ENCODE measurements at regions of chr18 and their contacts with region 1.

Region 1: GRCh38 chr18:22703883-22704585 is 229.1 kb upstream of the RBBP8 start:
- DNase-seq: no peak
- H3K4me3 ChIP-seq: no peak overlapping the region
- H3K27ac ChIP-seq: no peak overlapping the region
- H3K4me1 ChIP-seq: no peaks in the 10 kb centered on the region
- H3K27me3 ChIP-seq: no peaks in the 10 kb centered on the region
- CTCF ChIP-seq: peak; percentile 25 to 60 (median 48)

Region 2: DNA sequence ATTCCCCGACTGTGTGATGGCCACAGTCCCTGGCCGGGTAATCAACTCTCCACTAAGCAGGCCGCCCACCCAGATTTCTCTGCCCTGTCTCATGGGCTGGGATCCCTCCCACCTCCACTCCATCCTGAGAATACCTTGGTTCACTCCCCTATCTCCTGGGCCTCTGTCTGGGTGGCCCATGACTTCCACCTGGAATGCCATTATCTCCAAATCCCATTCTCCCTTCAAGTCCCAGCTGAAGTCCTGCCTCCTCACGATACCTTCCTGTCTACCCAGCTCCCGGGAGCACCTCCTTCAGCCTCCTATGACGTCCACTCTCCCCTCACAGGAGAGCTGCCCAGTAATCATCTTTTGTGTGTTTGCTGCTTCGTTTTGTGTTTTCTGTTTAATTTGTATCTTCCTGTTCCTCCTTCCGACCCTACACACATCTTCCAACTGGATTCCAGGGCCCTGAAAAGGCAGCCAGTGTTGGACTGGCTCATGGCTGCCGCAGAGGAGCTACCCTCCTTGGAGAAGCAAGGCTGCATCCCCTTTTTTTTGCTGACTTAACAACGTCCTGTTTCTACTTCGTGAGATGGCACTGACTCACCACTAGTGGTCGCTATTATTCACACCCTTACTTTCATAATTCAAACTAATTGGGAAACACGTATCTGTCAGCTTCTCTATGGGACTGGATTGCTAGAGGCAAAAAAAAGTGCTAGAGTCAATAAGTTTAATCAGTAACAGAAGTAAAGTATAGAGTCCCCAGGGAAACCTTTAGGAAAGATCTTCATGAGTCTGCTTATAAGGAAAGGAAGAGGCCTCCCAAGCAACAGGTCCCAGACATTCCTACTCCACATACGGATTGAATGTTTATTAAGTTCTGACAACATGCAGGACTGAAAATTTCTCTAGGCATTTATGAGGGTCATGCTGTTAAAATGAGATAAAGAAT is 706.6 kb before region 1 on chr18:
- intact Hi-C with region 1: loop called (anchors 10 kb)
- DNase-seq: no peak
- H3K4me3 ChIP-seq: no peak overlapping the region
- H3K27ac ChIP-seq: peak overlapping the region; percentile 53 to 54
- H3K4me1 ChIP-seq: peaks cover 0 to 21% of the 10 kb centered on the region in 2 donors
- H3K27me3 ChIP-seq: no peaks in the 10 kb centered on the region
- CTCF ChIP-seq: peak; percentile 40 to 87 (median 82)

Measured in ascending aorta (tissue), 2 donors.